ENCODE measurements at regions of chr9 and their contacts with region 1.

Region 1: DNA sequence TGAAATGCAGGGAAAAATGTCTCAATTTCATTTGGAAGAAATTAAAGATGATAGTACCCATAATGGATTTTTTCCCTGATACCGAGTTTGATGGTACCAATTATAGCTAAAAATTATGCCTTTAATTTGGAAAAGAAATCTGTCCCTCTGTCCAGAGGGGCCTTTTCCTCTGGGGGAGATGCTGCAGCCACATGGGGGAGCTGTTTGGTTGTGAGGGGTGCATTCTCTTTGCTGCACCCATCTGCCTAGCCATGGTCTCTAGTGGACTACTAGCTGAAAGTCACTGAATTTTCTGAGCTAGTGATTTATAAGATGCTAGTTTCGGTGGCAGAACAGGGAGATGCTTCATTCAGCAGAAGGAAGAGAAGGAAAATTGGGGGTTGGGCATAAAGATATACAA is 9.6 kb downstream of the SEC61B start:
- DNase-seq: no peak
- H3K4me3 ChIP-seq: no peak overlapping the region
- CTCF ChIP-seq: peak; percentile 40

Region 2: DNA sequence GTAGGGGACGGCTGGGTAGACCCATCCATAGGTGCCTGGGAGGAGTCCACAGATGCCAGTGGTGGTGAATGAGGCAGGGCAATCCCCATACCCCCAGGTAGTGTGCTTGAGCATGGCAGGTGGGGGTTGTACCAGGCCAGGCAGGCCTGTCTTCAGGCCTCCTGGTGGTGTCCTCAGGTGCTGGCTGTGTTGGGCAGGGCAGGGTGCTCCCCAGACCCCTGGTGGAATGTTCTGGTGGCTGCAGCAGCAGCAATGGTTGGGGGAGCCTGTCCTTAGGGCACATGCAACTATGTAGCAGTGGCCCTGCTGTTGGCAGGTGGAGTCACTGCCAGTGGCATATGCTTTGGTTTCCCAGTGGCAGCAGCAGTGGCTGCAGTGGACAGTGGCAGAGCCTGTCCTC is 20.0 kb before region 1 on chr9:
- CTCF ChIA-PET with region 1: interaction called, 11 read pairs
- POLR2A ChIA-PET with region 1: no interaction called
- DNase-seq: no peak
- H3K4me3 ChIP-seq: no peak overlapping the region
- CTCF ChIP-seq: no peak

Measured in AG04449 (cell line).